AG04449 (cell line): ENCODE measurements at regions of chr5 and their contacts with region 1.

Region 1: DNA sequence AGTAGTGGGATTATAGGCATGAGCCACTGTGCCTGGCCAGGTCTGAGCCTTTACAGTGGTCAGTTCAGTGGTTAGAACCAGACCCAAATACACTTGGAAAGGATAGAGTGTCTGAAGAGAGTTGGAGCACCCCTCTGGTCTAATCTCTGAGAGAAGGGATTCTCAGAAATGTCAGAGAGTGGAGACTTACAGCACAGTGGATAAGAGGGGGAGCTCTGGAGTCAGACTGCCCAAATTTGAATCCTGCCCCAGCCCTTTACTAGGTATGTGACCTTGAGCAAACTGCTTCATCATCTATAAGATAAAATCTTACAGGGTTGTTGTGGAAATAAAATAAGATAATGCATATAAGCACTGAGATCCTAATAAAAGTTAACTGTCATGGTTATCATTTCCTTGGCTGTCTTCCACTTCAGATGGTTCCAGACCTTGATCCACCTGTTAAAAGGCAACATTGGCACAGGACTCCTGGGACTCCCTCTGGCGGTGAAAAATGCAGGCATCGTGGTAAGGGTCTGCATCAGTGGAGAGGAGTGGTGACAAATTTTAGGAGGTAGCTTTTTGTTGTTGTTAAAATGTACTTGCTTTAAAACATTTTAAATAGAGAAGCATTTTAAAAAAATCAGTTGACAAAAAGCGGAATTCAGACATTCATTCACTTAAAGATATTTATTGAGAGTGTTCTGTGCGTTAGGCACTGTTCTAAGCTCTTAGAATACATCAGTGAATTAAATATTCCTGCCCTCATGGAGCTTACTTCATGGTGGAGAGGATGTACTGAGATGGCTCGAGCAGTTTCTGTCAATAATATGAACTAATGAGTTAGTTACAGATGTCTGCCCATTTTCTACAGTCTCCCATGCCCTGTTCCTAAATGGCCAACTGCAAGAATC is 16.0 kb downstream of the SLC36A1 start:
- DNase-seq: no peak
- H3K4me3 ChIP-seq: no peak overlapping the region
- CTCF ChIP-seq: peak; percentile 14

Region 2: GRCh38 chr5:151477101-151477500 is 13.7 kb after region 1 on chr5:
- CTCF ChIA-PET with region 1: interaction called, 19 read pairs
- POLR2A ChIA-PET with region 1: interaction called, 5 read pairs
- DNase-seq: no peak
- H3K4me3 ChIP-seq: no peak overlapping the region
- CTCF ChIP-seq: no peak

Region 3: GRCh38 chr5:151499501-151500035 is 36.2 kb after region 1 on chr5:
- CTCF ChIA-PET with region 1: interaction called, 18 read pairs
- POLR2A ChIA-PET with region 1: no interaction called
- DNase-seq: no peak
- H3K4me3 ChIP-seq: no peak overlapping the region
- CTCF ChIP-seq: no peak

Region 4: GRCh38 chr5:151523335-151523734 is 60.0 kb after region 1 on chr5:
- CTCF ChIA-PET with region 1: interaction called, 16 read pairs
- POLR2A ChIA-PET with region 1: no interaction called
- DNase-seq: no peak
- H3K4me3 ChIP-seq: no peak overlapping the region
- CTCF ChIP-seq: peak; percentile 52

Region 5: DNA sequence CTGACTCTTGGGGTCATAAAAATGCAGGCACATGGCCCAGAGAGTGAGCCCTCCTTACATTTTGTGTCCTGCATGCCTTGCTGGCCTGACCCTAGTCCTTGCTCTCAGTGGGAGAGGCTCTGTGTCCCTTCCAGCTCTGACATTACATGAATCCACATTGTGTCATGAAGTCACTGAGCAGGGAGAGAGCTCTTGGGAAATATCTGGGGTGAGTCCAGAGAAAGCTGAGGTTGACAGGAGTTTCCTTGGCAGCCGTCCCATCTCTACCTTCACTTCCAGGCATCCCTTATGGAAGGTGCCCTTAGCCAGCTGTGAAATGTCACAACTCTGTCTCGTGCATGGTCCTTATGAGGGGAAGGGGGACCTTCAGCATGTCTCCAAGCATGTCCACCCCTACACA is 86.8 kb after region 1 on chr5:
- CTCF ChIA-PET with region 1: no interaction called
- POLR2A ChIA-PET with region 1: no interaction called
- DNase-seq: no peak
- H3K4me3 ChIP-seq: no peak overlapping the region
- CTCF ChIP-seq: no peak